CD14-positive monocyte (primary cell): ENCODE measurements at regions of chr12 and their contacts with region 1.

Region 1: DNA sequence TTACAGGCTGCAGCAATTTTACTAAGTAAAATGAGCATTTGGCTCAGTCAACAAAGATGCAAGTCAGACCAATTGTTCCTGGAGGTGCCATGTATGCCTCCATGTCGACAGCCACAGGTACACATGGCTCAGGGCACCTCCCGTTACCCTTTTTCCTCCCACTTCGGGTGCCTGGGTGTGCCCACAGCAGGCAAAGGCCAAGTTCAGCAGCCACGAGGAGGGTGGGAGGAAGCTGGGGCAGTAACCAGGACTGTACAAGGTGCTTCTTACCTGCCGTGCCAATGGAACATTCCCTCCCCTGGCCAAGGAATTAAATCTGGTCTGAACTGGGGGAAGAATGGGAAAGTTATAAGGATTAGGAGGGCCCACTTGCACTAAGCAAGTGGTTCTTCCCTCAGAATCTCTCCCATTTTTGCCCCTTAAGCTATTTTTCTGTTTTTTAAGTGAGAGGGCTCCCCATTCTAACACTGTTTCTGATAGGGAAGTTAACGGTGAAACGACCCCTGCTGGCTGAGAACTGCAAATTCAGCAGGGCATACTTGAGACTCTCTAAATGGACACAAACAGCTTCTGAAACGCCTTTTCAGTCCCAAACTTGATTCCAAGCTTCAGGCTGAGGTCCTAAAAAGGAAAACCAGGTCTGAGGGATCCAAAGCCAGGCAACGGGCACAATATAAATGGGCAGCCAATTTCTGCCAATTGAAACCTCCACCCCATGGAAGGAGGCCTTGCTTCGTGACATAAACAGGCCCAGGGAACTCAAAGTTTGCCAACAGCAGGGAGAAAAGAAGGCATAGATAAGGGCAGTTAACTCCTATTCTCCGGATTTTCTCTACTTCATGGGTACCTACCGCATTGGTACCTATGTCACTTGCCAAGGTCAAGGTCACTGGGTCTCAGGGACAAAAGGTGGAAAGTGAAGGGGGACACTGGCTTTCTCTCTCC is 24.8 kb downstream of the CLECL1 start:
- DNase-seq: peak; percentile 47 to 63 (median 58)
- H3K4me3 ChIP-seq: no peak overlapping the region
- H3K4me3 Mint-ChIP-seq: no peak overlapping the region
- H3K27ac ChIP-seq: no peak overlapping the region
- H3K27ac Mint-ChIP-seq: peak overlapping the region in 5 of 7 donors; percentile 6 to 78 (median 63)
- H3K4me1 ChIP-seq: peaks cover 22 to 29% of the 10 kb centered on the region in 2 donors
- H3K4me1 Mint-ChIP-seq: peaks cover 30% of the 10 kb centered on the region
- H3K27me3 ChIP-seq: no peaks in the 10 kb centered on the region
- H3K27me3 Mint-ChIP-seq: no peaks in the 10 kb centered on the region
- CTCF ChIP-seq: peak; percentile 86

Region 2: DNA sequence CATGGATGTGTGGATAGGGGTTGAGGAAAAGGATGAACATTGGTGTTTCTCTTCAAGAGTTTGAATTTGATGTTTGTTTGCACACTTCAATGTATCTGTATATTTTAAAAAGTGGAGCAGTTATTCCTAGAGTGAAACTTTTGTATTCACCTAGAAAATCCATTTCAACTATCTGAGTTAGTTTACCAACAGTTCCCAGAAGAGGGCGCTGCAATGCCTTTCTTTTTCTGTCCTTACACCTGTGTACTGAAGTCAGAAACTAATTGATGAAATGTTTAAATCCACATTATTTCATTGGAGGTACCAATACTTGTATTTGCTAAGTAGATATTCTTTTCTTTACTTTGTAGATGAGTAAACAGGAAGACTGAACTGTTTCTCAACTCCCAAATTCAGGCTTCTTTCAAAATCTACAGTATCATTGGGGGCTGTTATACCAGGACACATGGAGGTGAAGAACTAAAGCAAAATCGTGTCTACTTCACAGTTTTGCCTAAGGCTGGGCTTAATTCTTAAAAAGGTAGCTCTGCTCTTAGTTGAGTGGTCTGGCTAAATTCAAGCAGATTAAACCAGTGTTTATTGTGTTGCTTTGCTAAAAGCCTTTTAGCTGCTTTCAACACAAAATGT is 73.8 kb before region 1 on chr12:
- intact Hi-C with region 1: loop called in 1 of 2 experiments (anchors 10 kb)
- DNase-seq: peak in 2 of 3 donors; percentile 45 to 57
- H3K4me3 ChIP-seq: no peak overlapping the region
- H3K4me3 Mint-ChIP-seq: no peak overlapping the region
- H3K27ac ChIP-seq: no peak overlapping the region
- H3K27ac Mint-ChIP-seq: peak overlapping the region in 2 of 7 donors; percentile 32 to 42
- H3K4me1 ChIP-seq: peaks cover 21 to 30% of the 10 kb centered on the region in 2 donors
- H3K4me1 Mint-ChIP-seq: peaks cover 28% of the 10 kb centered on the region
- H3K27me3 ChIP-seq: no peaks in the 10 kb centered on the region
- H3K27me3 Mint-ChIP-seq: peaks cover 0 to 4% (median 0%) of the 10 kb centered on the region in 3 donors
- CTCF ChIP-seq: peak; percentile 89

Region 3: GRCh38 chr12:9651265-9651729 is 56.8 kb before region 1 on chr12:
- intact Hi-C with region 1: loop called in 1 of 2 experiments (anchors 5 kb)
- DNase-seq: peak; percentile 18 to 63 (median 41)
- H3K4me3 ChIP-seq: peak overlapping the region in 2 of 3 experiments; percentile 34 to 84
- H3K4me3 Mint-ChIP-seq: peak overlapping the region; percentile 46 to 75
- H3K27ac ChIP-seq: peak overlapping the region; percentile 56 to 81
- H3K27ac Mint-ChIP-seq: peak overlapping the region; percentile 89 to 98 (median 97)
- H3K4me1 ChIP-seq: peaks cover 24 to 59% of the 10 kb centered on the region in 2 donors
- H3K4me1 Mint-ChIP-seq: peaks cover 47% of the 10 kb centered on the region
- H3K27me3 ChIP-seq: no peaks in the 10 kb centered on the region
- H3K27me3 Mint-ChIP-seq: no peaks in the 10 kb centered on the region
- CTCF ChIP-seq: no peak